Posterior cingulate gyrus (tissue), 11 donors: ENCODE measurements at regions of chr5 and their contacts with region 1.

Region 1: DNA sequence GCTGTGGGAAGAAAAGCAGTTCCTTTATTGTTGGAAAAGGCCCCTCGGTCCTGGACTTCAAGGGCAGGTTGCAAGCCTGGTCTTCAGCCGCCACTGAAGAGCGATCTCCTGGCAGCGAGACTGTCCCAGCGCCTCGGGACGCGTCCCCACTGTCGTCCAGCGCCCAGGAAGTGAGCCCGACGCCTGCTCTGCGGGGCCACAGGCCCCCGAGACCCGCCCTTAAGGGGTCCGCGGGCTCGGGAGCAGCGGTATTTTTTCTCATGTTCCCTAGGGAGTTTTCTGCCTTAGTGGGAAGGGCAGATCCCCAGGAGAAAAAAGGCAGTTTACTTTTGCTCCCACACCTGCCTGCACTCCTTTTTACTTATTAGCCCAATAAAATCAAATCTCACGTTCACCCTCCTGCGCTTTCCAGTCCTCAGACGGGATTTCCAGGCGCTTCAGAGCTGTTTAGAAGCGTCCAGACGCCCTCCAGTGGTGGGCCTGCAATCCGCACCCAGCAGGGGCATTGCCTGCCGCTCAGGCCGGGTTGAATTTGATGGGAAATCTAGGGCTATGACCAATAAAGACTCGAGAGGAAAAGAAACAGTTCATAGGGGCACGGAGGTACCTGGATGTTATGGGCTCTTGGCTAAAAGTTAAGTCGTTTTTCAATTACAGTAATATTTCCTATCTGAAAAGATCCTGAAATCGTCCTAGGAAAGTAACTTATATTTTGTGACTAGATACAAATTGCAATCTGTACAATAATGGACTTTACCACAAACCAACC is 2.8 kb upstream of the EFNA5 start:
- DNase-seq: peak; percentile 77 to 97 (median 88)

Region 2: GRCh38 chr5:107257885-107258520 is 415.5 kb before region 1 on chr5:
- intact Hi-C with region 1: loop called (anchors 10 kb)
- DNase-seq: no peak

Region 3: DNA sequence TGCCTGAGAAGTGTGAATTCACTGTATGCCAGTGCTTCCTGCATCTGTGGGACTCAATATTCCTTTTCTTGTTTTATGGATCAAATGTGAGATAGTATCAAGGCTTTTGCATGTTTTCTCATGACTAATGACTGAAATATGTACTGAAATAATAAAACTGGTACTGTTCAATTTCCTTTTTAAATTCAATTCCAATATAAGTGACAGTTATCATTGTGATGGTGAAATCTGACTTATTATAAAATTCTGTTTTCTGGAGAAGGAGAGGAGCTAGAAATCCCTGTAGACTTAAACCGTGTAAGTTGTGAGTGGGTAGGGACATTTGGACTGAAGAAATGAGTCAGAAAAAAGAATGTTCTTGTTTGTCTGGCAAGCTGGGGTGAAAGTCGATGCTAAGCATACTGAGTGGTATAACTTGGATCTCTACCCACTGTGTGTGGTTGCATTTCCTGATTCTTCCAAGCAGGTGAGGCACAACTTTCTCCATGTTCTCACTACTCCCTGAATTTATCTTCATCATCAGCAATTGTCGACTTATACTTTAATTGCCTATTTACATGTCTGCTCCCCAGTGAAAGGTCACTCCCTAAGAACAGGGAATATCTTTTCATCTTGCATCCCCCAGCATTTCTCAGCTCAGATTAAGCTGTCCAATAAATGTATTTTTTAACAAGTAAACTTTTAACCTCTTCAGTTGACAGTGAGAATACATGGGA is 247.9 kb before region 1 on chr5:
- intact Hi-C with region 1: loop called (anchors 10 kb)
- DNase-seq: no peak

Region 4: DNA sequence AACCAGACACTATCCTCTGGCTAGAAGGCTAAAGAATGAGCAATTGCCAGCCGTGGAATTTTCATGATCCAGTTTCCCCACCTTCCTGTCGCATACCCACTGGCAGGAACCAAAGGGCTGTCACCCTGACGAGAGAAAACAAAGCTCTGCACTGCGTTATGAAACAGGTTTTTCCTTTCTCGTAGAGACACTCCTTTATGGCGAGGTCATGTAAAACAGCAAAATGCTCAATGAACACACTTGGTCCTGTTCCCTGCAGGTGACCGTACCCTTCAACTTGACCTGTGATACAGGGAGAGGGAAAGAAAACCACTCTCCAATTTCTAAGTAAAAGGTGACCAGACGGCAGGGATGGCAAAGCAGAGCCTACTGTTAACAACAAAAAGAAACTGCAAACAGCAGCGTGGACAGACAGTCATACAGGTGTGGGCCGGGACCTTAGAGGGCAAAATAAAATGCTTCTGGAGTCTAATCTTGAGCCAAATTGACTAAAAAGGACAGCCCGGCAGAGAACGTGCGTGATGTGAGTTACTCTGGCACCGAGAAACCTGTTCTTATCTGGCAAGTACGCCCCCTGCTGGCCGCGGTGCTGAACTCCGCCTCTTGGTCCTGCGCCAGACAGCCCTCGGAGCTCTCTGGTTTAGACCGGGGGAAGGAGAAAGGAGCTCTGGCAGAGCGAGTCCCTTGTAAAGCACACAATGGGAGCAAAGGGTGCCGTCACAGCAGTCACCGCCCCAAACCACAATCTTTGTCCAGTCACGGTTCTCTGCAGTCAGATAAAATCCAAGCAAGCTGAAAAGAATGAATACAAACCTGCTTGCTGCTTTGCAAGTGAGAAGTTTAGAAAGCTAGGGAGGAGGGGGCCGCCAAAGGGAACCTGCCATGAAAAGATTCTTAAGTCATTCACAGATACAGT is 101.7 kb before region 1 on chr5:
- intact Hi-C with region 1: loop called (anchors 2 kb)
- DNase-seq: peak; percentile 88 to 98 (median 94)

Region 5: DNA sequence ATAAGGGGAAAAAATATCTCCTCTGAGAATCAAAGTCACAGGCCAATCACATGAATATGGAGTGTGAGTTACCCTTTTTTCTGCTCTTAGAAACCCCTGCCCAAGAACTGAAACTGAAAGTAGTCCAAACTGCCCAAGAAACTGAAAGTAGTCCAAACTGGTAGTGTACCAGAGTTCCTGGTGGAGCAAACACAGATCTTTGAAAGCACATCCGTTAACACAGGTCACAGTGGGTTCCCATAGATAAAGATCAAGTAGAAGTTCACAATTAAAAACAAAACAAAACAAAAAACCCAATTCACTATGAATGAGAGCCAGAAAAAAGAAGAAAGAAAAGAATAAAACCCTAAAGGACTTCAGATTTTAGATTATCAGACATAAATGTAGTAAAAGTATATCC is 329.6 kb after region 1 on chr5:
- intact Hi-C with region 1: no loop called
- DNase-seq: no peak

Region 6: DNA sequence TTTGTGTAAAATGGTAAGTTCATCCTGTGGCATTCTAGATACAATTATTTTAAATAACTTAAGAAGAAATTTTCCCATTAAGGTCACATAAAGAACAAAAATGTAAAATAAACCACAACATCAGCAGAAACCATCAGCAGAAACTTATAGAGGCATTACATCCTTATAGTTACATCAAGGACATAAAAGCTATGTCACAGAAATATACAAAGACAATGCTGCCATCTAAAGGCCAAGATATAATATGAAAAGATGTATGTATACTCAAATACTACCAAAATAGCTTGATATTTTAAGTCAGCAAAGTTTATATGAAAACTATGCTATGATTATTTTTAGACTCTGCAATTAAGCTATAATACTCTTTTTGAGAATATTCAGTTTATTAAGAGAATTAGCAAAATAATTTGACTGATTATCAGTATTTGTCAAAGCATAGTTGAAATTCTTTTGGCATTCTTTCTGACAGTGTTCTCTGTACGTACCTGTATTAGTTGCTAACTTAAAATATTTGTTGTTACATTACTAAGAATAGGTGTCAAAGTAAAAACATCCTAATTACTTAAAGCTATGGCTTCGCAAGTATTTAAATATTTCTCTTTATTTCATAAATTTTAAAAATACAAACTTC is 672.1 kb after region 1 on chr5:
- intact Hi-C with region 1: loop called (anchors 10 kb)
- DNase-seq: no peak